Naive thymus-derived CD4-positive, alpha-beta T cell (primary cell): ENCODE measurements at regions of chr3 and their contacts with region 1.

Region 1: GRCh38 chr3:126083913-126084767 is at the start of gene SLC41A3:
- DNase-seq: peak; percentile 73 to 94 (median 84)
- ATAC-seq: peak; percentile 95
- H3K4me3 ChIP-seq: peak within 1 kb of the TSS; percentile 73
- H3K4me3 Mint-ChIP-seq: peak within 1 kb of the TSS; percentile 82 to 94 (median 91)
- H3K27ac ChIP-seq: peak within 1 kb of the TSS; percentile 91
- H3K27ac Mint-ChIP-seq: peak within 1 kb of the TSS; percentile 87 to 96 (median 91)
- H3K4me1 ChIP-seq: peaks cover 0 to 16% of the 10 kb centered on the region in 2 donors
- H3K4me1 Mint-ChIP-seq: peaks cover 11 to 27% (median 20%) of the 10 kb centered on the region in 7 donors
- H3K27me3 ChIP-seq: no peaks in the 10 kb centered on the region
- H3K27me3 Mint-ChIP-seq: peaks cover 0 to 4% (median 0%) of the 10 kb centered on the region in 5 donors
- total RNA-seq, gene SLC41A3: 24.1 to 33.6 (median 29.6) TPM

Region 2: GRCh38 chr3:125594581-125595011 is 489.5 kb before region 1 on chr3:
- CTCF ChIA-PET with region 1: no interaction called
- POLR2A ChIA-PET with region 1: no interaction called
- intact Hi-C with region 1: loop called in 1 of 2 experiments (anchors 2 kb)
- DNase-seq: peak in 4 of 9 donors; percentile 10 to 25 (median 16)
- ATAC-seq: no peak
- H3K4me3 ChIP-seq: peak overlapping the region; percentile 82
- H3K4me3 Mint-ChIP-seq: peak overlapping the region; percentile 90 to 99 (median 94)
- H3K27ac ChIP-seq: peak overlapping the region; percentile 90
- H3K27ac Mint-ChIP-seq: peak overlapping the region; percentile 73 to 95 (median 89)
- H3K4me1 ChIP-seq: peaks cover 4 to 15% of the 10 kb centered on the region in 2 donors
- H3K4me1 Mint-ChIP-seq: peaks cover 32 to 50% (median 42%) of the 10 kb centered on the region in 7 donors
- H3K27me3 ChIP-seq: no peaks in the 10 kb centered on the region
- H3K27me3 Mint-ChIP-seq: no peaks in the 10 kb centered on the region

Region 3: GRCh38 chr3:125990253-125990970 is 93.7 kb before region 1 on chr3:
- CTCF ChIA-PET with region 1: no interaction called
- POLR2A ChIA-PET with region 1: interaction called, 7 read pairs
- intact Hi-C with region 1: loop called (anchors 1 kb)
- DNase-seq: peak in 8 of 9 donors; percentile 57 to 84 (median 73)
- ATAC-seq: peak; percentile 91
- H3K4me3 ChIP-seq: peak overlapping the region; percentile 80
- H3K4me3 Mint-ChIP-seq: peak overlapping the region; percentile 95 to 100 (median 98)
- H3K27ac ChIP-seq: peak overlapping the region; percentile 82
- H3K27ac Mint-ChIP-seq: peak overlapping the region; percentile 92 to 100 (median 98)
- H3K4me1 ChIP-seq: peaks cover 5 to 7% of the 10 kb centered on the region in 2 donors
- H3K4me1 Mint-ChIP-seq: peaks cover 10 to 41% (median 25%) of the 10 kb centered on the region in 7 donors
- H3K27me3 ChIP-seq: no peaks in the 10 kb centered on the region
- H3K27me3 Mint-ChIP-seq: peaks cover 0 to 23% (median 0%) of the 10 kb centered on the region in 5 donors

Region 4: DNA sequence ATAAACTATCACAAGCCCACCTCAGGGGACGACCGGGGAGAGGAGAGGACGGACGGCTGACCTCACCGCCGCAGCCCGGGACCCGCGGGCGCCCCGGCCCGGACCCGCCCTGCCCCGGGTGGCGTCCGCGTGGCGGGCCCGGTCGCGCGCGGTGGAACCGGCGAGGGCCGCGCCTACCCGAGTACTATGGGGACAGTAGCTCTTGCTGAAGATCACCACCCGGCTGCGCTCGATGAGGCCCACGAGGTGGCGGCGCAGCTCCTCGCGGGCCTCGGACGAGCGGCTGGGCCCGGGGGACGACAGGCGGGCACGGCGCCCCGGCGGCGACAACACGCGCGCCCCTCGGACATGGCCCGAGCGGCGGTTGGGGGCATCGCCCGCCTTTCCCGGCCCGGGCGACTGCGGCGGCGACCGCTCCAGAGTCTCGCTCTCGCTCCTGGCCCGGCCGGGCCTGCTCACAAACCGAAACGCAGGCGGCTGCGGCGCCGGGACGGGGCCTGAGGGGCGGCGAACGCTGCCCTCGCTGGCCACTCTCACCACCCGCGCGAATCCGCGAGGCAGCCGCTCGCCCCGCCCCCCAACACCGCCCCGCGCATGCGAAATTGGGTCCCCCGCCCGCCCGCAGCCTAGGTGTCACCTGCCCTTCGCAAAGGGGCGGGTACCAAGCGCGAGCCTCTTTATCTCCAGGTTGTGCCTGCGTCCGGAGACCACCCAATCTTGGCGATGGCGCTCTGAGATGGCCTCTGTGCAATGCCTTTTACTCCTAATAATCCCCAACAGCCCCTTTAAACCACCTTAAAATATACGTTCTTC is 570.6 kb after region 1 on chr3 and contains the start of gene TXNRD3:
- CTCF ChIA-PET with region 1: no interaction called
- POLR2A ChIA-PET with region 1: no interaction called
- intact Hi-C with region 1: loop called in 1 of 2 experiments (anchors 5 kb)
- DNase-seq: peak; percentile 52 to 76 (median 71)
- ATAC-seq: peak; percentile 93
- H3K4me3 ChIP-seq: peak within 1 kb of the TSS; percentile 46
- H3K4me3 Mint-ChIP-seq: peak within 1 kb of the TSS; percentile 83 to 93 (median 89)
- H3K27ac ChIP-seq: peak within 1 kb of the TSS; percentile 51
- H3K27ac Mint-ChIP-seq: peak within 1 kb of the TSS in 7 of 9 donors; percentile 18 to 91 (median 51)
- H3K4me1 ChIP-seq: peaks cover 0 to 3% of the 10 kb centered on the region in 2 donors
- H3K4me1 Mint-ChIP-seq: peaks cover 4 to 19% (median 10%) of the 10 kb centered on the region in 7 donors
- H3K27me3 ChIP-seq: peaks cover 0 to 4% of the 10 kb centered on the region in 2 donors
- H3K27me3 Mint-ChIP-seq: peaks cover 0 to 51% (median 4%) of the 10 kb centered on the region in 5 donors
- total RNA-seq, gene TXNRD3: 0.46 to 4.8 (median 3.2) TPM

Region 5: DNA sequence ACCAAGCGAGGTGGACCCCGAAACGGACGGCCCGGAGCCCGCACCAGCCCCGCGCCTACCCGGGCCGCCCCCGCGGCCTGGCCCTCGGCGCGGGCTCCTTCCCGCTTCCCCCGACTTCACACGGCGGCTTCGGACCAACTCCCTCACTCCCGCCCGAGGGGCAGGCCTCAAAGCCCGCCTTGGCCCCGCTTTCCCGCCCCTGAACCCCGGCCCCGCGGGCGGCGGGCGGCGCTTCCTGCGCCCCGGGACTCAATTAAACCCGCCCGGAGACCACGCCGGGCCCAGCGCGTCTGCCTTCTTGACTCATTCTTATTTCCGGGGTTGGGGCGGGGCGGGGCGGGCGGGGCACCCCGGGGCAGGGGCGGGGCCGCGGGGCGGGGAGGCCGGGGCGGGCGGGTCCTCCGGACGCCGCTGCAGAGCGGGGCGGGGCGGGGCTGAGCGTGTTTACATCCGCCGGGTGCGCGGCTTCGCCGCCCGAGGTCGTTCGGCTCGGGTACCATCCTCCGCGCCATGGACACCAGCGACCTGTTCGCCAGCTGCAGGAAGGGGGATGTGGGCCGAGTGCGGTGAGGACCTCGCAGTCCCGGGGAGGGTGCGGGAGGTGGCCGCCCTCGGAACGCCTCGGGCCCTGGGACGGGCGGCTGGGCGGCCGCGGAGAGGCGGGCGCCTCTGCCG is 1588.5 kb after region 1 on chr3 and contains the start of gene ABTB1:
- CTCF ChIA-PET with region 1: no interaction called
- POLR2A ChIA-PET with region 1: no interaction called
- intact Hi-C with region 1: loop called in 1 of 2 experiments (anchors 10 kb)
- DNase-seq: peak; percentile 73 to 88 (median 83)
- ATAC-seq: peak; percentile 93
- H3K4me3 ChIP-seq: peak within 1 kb of the TSS; percentile 86
- H3K4me3 Mint-ChIP-seq: peak within 1 kb of the TSS; percentile 88 to 96 (median 94)
- H3K27ac ChIP-seq: peak within 1 kb of the TSS; percentile 98
- H3K27ac Mint-ChIP-seq: peak within 1 kb of the TSS; percentile 92 to 98 (median 97)
- H3K4me1 ChIP-seq: peaks cover 13 to 17% of the 10 kb centered on the region in 2 donors
- H3K4me1 Mint-ChIP-seq: peaks cover 17 to 37% (median 33%) of the 10 kb centered on the region in 7 donors
- H3K27me3 ChIP-seq: no peaks in the 10 kb centered on the region
- H3K27me3 Mint-ChIP-seq: no peaks in the 10 kb centered on the region
- total RNA-seq, gene ABTB1: 26.7 to 182 (median 124) TPM